ENCODE measurements at regions of chr1 and their contacts with region 1.

Region 1: GRCh38 chr1:2189459-2190425 is 4.8 kb downstream of the FAAP20 start:
- DNase-seq: peak; percentile 93
- H3K27ac ChIP-seq: peak overlapping the region; percentile 97
- CTCF ChIP-seq: no peak

Region 2: GRCh38 chr1:2381741-2382620 is 192.2 kb after region 1 on chr1:
- CTCF ChIA-PET with region 1: interaction called, 86 read pairs
- POLR2A ChIA-PET with region 1: interaction called, 10 read pairs
- DNase-seq: peak; percentile 82
- H3K27ac ChIP-seq: peak overlapping the region; percentile 42
- CTCF ChIP-seq: peak; percentile 90